Gastrocnemius medialis (tissue), 4 donors: ENCODE measurements at regions of chr9 and their contacts with region 1.

Region 1: DNA sequence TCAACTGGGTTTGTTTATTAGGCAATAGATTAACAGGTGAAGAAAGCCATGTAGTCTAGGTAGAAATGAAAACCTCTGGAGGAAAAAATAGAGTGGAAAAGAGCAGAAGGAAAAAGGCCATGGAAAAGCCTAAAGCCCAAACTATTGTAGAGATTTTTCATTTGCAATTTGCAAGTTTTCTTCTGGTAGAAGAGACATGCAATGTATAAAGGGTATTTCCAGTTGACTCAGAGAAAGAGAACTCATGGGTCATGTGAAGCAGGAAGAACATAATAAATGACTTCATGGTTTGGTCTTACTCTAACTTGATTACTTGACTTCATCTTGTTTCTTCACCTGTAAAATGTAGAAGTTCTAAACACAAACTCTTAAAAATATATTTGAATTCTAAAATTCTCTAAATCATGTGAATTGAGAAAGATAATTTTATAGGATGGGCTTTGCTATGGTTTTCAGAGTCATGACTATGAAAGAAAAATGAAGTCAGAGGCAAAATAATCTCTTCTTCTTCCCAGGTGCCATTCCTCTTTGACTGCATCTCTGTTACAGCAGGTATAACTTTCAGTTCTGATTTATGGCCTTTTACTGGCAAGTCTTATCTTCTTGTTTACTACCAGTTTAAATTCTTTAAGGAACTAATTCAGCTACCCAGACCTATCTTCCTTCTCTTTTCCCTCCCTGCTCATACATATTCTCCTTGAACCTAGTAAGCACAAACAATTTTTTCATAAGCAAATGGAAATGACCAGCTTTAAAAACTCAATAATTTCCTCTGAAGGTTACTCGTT is 47.7 kb upstream of the TMC1 start:
- DNase-seq: no peak
- ATAC-seq: no peak
- H3K4me3 ChIP-seq: no peak overlapping the region
- H3K27ac ChIP-seq: no peak overlapping the region
- H3K4me1 ChIP-seq: peaks cover 6 to 18% of the 10 kb centered on the region in 2 donors
- H3K27me3 ChIP-seq: no peaks in the 10 kb centered on the region
- CTCF ChIP-seq: no peak
- POLR2A ChIP-seq: no peak

Region 2: DNA sequence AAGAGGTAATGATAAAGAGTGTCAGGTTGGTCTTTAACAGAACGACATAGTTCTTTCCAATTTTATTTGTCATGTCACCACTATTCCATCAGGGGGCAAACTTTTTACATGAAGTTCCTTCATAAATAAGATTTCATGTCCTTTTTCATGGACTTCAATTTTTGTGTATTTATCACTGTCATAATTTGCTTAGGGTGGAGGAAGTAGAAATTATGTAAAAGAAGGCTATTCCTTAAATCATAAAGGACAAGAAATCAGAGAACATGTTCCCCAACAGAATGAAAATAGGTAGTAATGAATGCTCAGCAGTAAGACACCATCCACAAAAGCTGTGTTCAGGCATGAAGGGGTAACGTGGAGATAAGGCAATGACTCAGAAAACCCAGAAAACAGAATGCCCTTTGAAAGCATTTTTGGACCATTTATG is 181.4 kb before region 1 on chr9:
- in situ Hi-C with region 1: no loop called
- intact Hi-C with region 1: loop called (anchors 10 kb)
- DNase-seq: no peak
- ATAC-seq: peak; percentile 61
- H3K4me3 ChIP-seq: no peak overlapping the region
- H3K27ac ChIP-seq: peak overlapping the region in 1 of 4 donors; percentile 27
- H3K4me1 ChIP-seq: peaks cover 0 to 11% of the 10 kb centered on the region in 2 donors
- H3K27me3 ChIP-seq: no peaks in the 10 kb centered on the region
- CTCF ChIP-seq: peak; percentile 38 to 64 (median 45)
- POLR2A ChIP-seq: no peak

Region 3: GRCh38 chr9:72396247-72397091 is 77.2 kb before region 1 on chr9:
- in situ Hi-C with region 1: no loop called
- intact Hi-C with region 1: loop called (anchors 5 kb)
- DNase-seq: peak in 1 of 2 donors; percentile 19
- ATAC-seq: peak; percentile 95 to 100
- H3K4me3 ChIP-seq: peak overlapping the region in 2 of 4 donors; percentile 3 to 24
- H3K27ac ChIP-seq: peak overlapping the region; percentile 72 to 83 (median 82)
- H3K4me1 ChIP-seq: peaks cover 5 to 17% of the 10 kb centered on the region in 2 donors
- H3K27me3 ChIP-seq: no peaks in the 10 kb centered on the region
- CTCF ChIP-seq: peak in 1 of 5 experiments; percentile 10
- POLR2A ChIP-seq: peak in 1 of 2 donors; percentile 25